Panc1 (cell line): ENCODE measurements at regions of chrX and their contacts with region 1.

Region 1: GRCh38 chrX:48539345-48540027 is at the start of gene TBC1D25:
- DNase-seq: peak; percentile 92
- ATAC-seq: peak; percentile 95
- H3K4me3 ChIP-seq: peak within 1 kb of the TSS; percentile 70 to 75
- H3K27ac ChIP-seq: peak within 1 kb of the TSS; percentile 86
- H3K4me1 ChIP-seq: peaks cover 4% of the 10 kb centered on the region; the same call in 1 of the 2 replicates
- H3K27me3 ChIP-seq: no peaks in the 10 kb centered on the region
- CTCF ChIP-seq: no peak; the same call in 1 of the 2 replicates
- total RNA-seq, gene TBC1D25: 29.4 TPM

Region 2: GRCh38 chrX:48196745-48197201 is 342.7 kb before region 1 on chrX and contains the start of gene SSX5:
- CTCF ChIA-PET with region 1: no interaction called
- POLR2A ChIA-PET with region 1: no interaction called
- in situ Hi-C with region 1: no loop called
- intact Hi-C with region 1: no loop called
- DNase-seq: no peak
- ATAC-seq: no peak
- H3K4me3 ChIP-seq: no peak within 1 kb of the TSS
- H3K27ac ChIP-seq: no peak within 1 kb of the TSS
- H3K4me1 ChIP-seq: no peaks in the 10 kb centered on the region
- H3K27me3 ChIP-seq: no peaks in the 10 kb centered on the region
- CTCF ChIP-seq: no peak
- total RNA-seq, gene SSX5: not detected

Region 3: GRCh38 chrX:48648336-48648751 is 108.9 kb after region 1 on chrX:
- CTCF ChIA-PET with region 1: no interaction called
- POLR2A ChIA-PET with region 1: no interaction called
- in situ Hi-C with region 1: no loop called
- intact Hi-C with region 1: no loop called
- DNase-seq: no peak
- ATAC-seq: peak; percentile 73
- H3K4me3 ChIP-seq: no peak overlapping the region
- H3K27ac ChIP-seq: no peak overlapping the region
- H3K4me1 ChIP-seq: no peaks in the 10 kb centered on the region
- H3K27me3 ChIP-seq: no peaks in the 10 kb centered on the region
- CTCF ChIP-seq: no peak

Region 4: GRCh38 chrX:48911412-48912182 is 372.1 kb after region 1 on chrX and contains the start of gene SLC35A2:
- CTCF ChIA-PET with region 1: no interaction called
- POLR2A ChIA-PET with region 1: interaction called, 18 read pairs
- in situ Hi-C with region 1: no loop called
- intact Hi-C with region 1: no loop called
- DNase-seq: no peak
- ATAC-seq: peak; percentile 94
- H3K4me3 ChIP-seq: peak within 1 kb of the TSS; percentile 71 to 99
- H3K27ac ChIP-seq: peak within 1 kb of the TSS; percentile 92
- H3K4me1 ChIP-seq: peaks cover 11% of the 10 kb centered on the region
- H3K27me3 ChIP-seq: no peaks in the 10 kb centered on the region
- CTCF ChIP-seq: no peak
- total RNA-seq, gene SLC35A2: 72.4 TPM